ENCODE measurements at regions of chr15 and their contacts with region 1.

Region 1: DNA sequence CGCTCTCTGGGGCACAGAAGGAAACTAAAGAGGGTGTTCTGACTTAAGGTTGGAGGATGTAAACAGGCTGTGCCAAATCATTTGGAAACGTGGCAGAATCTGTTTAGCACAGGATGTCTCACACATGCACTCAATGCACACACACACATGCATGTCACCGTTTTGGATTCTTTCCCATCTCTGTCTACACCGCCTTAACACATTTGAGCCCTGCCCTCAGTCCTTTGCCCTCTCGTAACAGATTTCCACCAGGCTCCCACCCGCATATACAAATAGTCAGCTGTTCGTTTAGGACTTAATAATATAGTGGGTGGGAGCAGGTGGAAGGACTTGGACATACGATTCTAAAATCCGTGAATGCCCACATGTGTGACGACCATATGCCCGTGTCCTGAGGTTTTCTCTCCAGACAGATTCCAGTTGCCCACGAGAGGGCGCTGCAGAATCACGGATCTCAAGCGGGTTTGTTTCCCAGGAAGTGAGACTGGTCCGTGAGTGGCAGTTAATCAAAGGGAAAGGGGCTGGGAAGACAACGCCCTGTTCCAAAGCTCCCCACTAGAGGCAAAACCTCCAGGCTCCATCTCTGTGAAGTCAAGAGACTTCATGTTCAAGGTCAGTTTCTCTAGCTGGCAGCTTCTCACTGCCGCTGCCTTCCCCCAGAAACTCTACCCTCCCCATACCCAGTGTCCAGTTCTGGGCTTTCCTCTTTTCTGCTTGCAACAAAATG is 44.5 kb downstream of the NOX5 start:
- DNase-seq: peak; percentile 84
- H3K4me3 Mint-ChIP-seq: no peak overlapping the region
- H3K27ac Mint-ChIP-seq: no peak overlapping the region
- H3K4me1 Mint-ChIP-seq: peaks cover 25% of the 10 kb centered on the region
- H3K27me3 Mint-ChIP-seq: peaks cover 10% of the 10 kb centered on the region

Region 2: GRCh38 chr15:68791431-68792283 is 267.3 kb before region 1 on chr15:
- CTCF ChIA-PET with region 1: no interaction called
- DNase-seq: peak; percentile 67
- H3K4me3 Mint-ChIP-seq: peak overlapping the region; percentile 33
- H3K27ac Mint-ChIP-seq: peak overlapping the region; percentile 87
- H3K4me1 Mint-ChIP-seq: peaks cover 74% of the 10 kb centered on the region
- H3K27me3 Mint-ChIP-seq: no peaks in the 10 kb centered on the region

Region 3: GRCh38 chr15:69126054-69126469 is 67.1 kb after region 1 on chr15:
- CTCF ChIA-PET with region 1: no interaction called
- DNase-seq: no peak
- H3K4me3 Mint-ChIP-seq: no peak overlapping the region
- H3K27ac Mint-ChIP-seq: no peak overlapping the region
- H3K4me1 Mint-ChIP-seq: peaks cover 5% of the 10 kb centered on the region
- H3K27me3 Mint-ChIP-seq: peaks cover 19% of the 10 kb centered on the region

Region 4: DNA sequence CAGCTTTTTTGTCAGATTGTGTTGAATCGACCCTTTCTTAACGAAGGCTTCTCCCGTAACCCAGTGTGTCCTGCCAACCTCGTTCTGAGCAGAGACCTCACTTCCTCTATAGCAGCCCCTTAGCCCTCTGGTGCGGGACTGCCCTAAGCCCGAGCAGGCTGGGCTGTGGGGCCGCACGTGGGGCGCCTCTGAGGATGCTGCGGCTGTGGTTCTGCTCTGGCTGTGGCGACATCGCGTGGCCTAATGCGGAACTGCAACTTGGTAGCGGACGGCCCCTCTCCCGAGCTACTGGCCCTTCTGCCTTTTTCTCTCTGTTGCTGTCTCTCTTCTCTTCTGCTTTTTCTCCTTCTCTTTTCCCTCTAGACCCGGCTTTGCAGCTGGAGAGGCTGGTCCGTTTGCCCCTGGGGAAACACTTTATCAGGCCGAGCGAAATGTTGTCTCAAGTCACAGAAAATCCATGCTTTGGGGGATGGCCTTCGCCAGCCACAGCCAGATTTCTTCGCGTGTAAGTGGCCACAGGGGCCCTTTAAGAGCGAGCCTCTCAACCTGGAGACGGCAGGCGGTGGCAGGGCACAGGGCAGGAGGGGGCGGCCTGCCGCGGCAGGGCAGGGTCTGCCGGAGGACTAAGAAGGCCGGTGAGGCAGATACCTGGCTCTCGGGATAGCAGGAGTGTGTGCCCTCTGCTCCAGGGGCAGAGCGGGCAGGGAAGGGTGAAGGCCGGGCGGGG is 335.7 kb after region 1 on chr15:
- CTCF ChIA-PET with region 1: interaction called, 36 read pairs
- DNase-seq: peak; percentile 85
- H3K4me3 Mint-ChIP-seq: no peak overlapping the region
- H3K27ac Mint-ChIP-seq: no peak overlapping the region
- H3K4me1 Mint-ChIP-seq: peaks cover 11% of the 10 kb centered on the region
- H3K27me3 Mint-ChIP-seq: peaks cover 49% of the 10 kb centered on the region